Heart right ventricle (tissue), 16 donors: ENCODE measurements at regions of chr21 and their contacts with region 1.

Region 1: GRCh38 chr21:34073032-34073869 is at the starts of genes MRPS6 and SLC5A3:
- DNase-seq: peak; percentile 82 to 88
- ATAC-seq: peak; percentile 87 to 94 (median 92)
- H3K4me3 ChIP-seq: peak within 1 kb of the TSS; percentile 30 to 85 (median 79)
- H3K27ac ChIP-seq: peak within 1 kb of the TSS; percentile 46 to 92 (median 86)
- H3K4me1 ChIP-seq: peaks cover 0 to 48% (median 28%) of the 10 kb centered on the region in 9 donors
- H3K27me3 ChIP-seq: no peaks in the 10 kb centered on the region
- CTCF ChIP-seq: peak in 2 of 9 donors; percentile 9 to 10
- total RNA-seq, gene MRPS6: 32.0 to 68.1 (median 38.4) TPM
- total RNA-seq, gene SLC5A3: 1.8 to 7.4 (median 2.8) TPM

Region 2: GRCh38 chr21:33924079-33924765 is 149.0 kb before region 1 on chr21:
- intact Hi-C with region 1: loop called in 3 of 10 experiments (anchors 5 kb)
- DNase-seq: peak; percentile 89 to 90
- ATAC-seq: peak; percentile 94 to 98 (median 96)
- H3K4me3 ChIP-seq: no peak overlapping the region
- H3K27ac ChIP-seq: no peak overlapping the region
- H3K4me1 ChIP-seq: peaks cover 0 to 10% (median 0%) of the 10 kb centered on the region in 9 donors
- H3K27me3 ChIP-seq: peaks cover 0 to 5% (median 0%) of the 10 kb centered on the region in 7 donors
- CTCF ChIP-seq: peak; percentile 90 to 96 (median 95)

Region 3: DNA sequence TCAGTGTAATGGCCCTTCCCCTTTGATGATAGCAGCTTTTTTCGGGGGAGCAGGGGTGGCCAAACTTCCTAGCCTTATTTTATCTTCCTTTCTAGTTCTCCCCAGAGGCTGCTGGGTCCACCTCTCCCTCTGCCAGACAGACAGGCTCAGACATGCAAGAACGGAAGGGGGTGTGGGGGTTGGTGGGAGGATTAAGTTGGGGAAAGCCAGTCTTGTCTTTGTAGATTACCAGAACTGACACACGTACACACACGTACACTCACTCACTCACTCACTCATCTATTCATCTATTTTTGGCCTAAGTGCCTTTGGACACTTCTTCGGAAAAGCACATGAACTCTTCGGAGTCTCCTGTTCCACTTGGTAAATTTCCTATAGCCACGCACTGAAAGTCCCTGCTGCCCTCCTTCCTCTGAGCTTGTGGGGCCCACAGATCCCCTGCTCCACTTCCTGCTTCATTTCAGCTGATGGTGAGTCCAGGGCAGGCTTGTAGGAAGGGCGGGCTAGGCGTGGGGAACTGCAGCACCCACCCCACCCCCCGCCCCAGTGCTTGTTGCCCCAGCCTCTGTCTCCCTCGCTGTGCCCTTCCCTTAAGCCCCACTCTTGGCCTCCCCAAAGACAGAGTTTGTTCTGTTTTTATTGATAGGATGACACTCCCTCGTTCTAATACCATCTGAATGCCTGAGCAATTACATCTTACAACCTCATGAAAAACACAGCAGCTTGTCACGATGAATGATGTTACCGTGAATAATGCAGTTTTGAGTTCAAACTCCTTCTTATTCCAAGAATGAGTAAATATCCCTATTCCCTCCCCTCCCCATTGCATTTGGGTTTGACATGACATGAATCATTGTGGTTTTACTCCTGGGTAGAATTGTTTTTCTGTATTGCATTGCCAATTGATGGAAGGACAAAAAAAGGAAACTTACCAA is 96.9 kb before region 1 on chr21:
- intact Hi-C with region 1: loop called in 1 of 10 experiments (anchors 10 kb)
- DNase-seq: peak; percentile 34 to 35
- ATAC-seq: peak; percentile 69 to 92 (median 78)
- H3K4me3 ChIP-seq: peak overlapping the region in 4 of 10 donors; percentile 10 to 22 (median 20)
- H3K27ac ChIP-seq: peak overlapping the region; percentile 28 to 91 (median 76)
- H3K4me1 ChIP-seq: peaks cover 0 to 40% (median 10%) of the 10 kb centered on the region in 9 donors
- H3K27me3 ChIP-seq: no peaks in the 10 kb centered on the region
- CTCF ChIP-seq: no peak

Region 4: GRCh38 chr21:34202553-34203372 is 129.5 kb after region 1 on chr21:
- intact Hi-C with region 1: loop called in 9 of 10 experiments (anchors 5 to 10 kb)
- DNase-seq: peak in 1 of 2 donors; percentile 38
- ATAC-seq: peak in 4 of 8 donors; percentile 2 to 23 (median 12)
- H3K4me3 ChIP-seq: peak overlapping the region in 2 of 10 donors; percentile 26 to 54
- H3K27ac ChIP-seq: peak overlapping the region in 3 of 10 donors; percentile 9 to 64 (median 36)
- H3K4me1 ChIP-seq: peaks cover 0 to 72% (median 27%) of the 10 kb centered on the region in 9 donors
- H3K27me3 ChIP-seq: no peaks in the 10 kb centered on the region
- CTCF ChIP-seq: no peak

Region 5: DNA sequence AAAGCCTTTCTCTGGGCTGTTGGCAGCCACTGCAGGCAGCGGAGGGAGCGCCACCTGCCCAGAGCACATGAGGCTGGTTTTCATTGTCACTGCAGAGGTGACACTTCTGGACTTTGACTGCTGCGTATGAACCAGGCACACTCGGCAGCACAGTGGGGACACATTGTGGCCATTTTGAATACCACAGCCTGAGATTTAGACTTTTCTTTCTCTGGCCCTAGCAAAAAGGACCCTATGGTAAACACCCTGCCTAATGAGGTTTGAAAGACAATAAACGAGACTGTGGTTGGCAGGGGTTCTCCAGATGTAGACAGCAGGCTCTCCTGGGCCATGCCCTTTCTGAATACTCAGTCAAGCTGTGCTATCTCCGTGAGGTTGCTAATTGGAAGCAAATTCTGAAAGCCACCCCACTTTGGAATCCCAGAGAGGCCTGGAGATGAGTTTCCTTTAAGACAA is 278.6 kb after region 1 on chr21:
- intact Hi-C with region 1: loop called in 6 of 10 experiments (anchors 2 to 5 kb)
- DNase-seq: peak; percentile 34 to 50
- ATAC-seq: peak; percentile 77 to 93 (median 80)
- H3K4me3 ChIP-seq: no peak overlapping the region
- H3K27ac ChIP-seq: no peak overlapping the region
- H3K4me1 ChIP-seq: peaks cover 0 to 21% (median 5%) of the 10 kb centered on the region in 9 donors
- H3K27me3 ChIP-seq: peaks cover 0 to 6% (median 0%) of the 10 kb centered on the region in 7 donors
- CTCF ChIP-seq: peak; percentile 55 to 82 (median 69)